ENCODE measurements at regions of chr14 and their contacts with region 1.

Region 1: DNA sequence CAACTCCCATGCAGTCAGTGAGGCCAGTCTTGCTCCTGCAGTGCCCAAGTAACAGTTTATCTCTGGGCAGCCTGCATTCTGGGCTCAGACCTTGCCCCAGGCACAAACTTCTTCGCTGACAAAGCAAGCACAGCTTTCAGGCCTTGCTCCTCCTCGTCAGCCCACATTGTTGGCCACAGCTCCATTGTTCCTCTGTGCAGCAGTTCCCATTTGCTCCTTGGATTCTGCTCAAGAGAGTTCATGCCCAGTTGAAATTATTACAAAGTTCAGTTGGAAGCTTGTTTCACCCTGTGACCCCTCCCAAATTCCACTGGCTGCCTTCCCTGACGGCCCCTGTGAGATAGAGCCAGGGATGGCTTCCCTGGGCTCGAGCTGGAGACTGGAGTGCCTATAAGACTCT is 163.4 kb upstream of the DDHD1 start:
- DNase-seq: no peak
- H3K4me3 ChIP-seq: no peak overlapping the region
- CTCF ChIP-seq: no peak

Region 2: DNA sequence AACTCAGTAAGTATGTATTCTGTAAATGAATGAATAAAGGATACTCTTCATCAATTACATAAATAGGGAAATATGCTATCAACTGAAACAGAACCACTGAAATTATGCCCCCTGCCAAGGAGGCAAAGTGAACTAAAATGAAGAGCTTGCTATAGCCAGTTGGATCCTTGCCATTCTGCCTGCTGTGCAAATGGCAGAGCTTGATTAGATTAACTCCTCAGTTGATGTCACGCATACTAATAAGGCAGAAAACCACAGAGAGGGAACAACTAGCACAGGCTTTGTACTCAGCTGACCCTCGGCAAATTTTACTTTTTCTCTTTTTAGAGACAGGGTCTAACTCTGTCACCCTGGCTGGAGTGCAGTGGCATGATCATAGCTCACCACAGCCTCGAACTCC is 329.0 kb before region 1 on chr14:
- CTCF ChIA-PET with region 1: no interaction called
- POLR2A ChIA-PET with region 1: no interaction called
- DNase-seq: no peak
- H3K4me3 ChIP-seq: no peak overlapping the region
- CTCF ChIP-seq: no peak

Region 3: GRCh38 chr14:53011053-53011462 is 305.4 kb before region 1 on chr14:
- CTCF ChIA-PET with region 1: no interaction called
- POLR2A ChIA-PET with region 1: no interaction called
- DNase-seq: peak; percentile 96
- H3K4me3 ChIP-seq: peak overlapping the region; percentile 12; the same call in 1 of the 2 replicates
- CTCF ChIP-seq: no peak

Region 4: DNA sequence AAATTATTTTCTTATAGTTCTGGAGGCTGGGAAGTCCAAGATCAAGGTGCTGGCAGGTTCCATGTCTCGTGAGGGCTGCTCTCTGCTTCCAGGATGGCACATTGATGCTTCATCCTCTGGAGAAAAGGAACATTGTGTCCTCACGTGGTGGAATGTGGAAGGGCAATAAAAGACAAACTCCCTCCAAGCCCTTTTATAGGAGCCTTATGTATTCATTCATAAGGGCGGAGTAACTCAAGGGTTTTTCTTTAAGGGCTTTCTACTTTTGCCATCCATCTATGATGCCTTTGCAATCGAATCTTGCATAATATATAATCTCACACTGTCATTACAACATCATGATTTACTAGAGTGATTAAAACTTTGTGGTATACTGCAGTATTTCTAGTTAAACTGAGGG is 30.7 kb before region 1 on chr14:
- CTCF ChIA-PET with region 1: no interaction called
- POLR2A ChIA-PET with region 1: no interaction called
- DNase-seq: no peak
- H3K4me3 ChIP-seq: no peak overlapping the region
- CTCF ChIP-seq: no peak

Region 5: GRCh38 chr14:53306267-53306721 is 10.2 kb before region 1 on chr14:
- CTCF ChIA-PET with region 1: interaction called, 25 read pairs
- POLR2A ChIA-PET with region 1: no interaction called
- DNase-seq: no peak
- H3K4me3 ChIP-seq: peak overlapping the region; percentile 51
- CTCF ChIP-seq: peak; percentile 61

Measured in AG04449 (cell line).